Right cardiac atrium (tissue), 5 donors: ENCODE measurements at regions of chr5 and their contacts with region 1.

Region 1: DNA sequence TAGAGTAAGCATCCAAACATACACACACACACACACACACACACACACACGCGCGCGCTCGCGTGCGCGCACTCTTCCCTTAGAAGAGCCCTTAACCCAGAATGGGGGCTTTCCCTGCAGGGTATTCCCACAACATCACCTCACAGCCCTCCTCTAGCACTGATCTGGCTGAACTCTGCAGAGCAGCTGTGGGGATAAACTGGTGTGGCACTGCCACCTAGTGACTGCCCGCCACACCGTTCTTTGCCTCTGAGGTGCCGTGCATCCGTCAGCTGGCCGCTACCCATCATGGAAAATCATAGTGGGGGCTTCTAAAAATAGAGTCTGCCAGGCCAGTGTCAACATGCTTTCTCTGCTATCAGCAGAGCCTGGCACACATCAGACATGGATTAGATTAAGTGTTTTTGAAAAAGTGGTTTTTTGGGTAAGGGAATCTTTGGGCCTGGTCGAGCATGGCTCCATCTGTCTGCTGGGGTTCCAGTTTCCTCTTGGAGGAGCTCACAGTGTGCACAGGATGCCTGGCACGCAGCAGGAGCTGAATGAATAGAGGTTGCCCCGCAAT is 88.1 kb downstream of the KCNN2 start:
- DNase-seq: peak; percentile 73 to 86 (median 84)
- ATAC-seq: peak; percentile 98
- H3K4me3 ChIP-seq: no peak overlapping the region
- H3K27ac ChIP-seq: peak overlapping the region; percentile 66
- H3K4me1 ChIP-seq: no peaks in the 10 kb centered on the region
- H3K27me3 ChIP-seq: no peaks in the 10 kb centered on the region

Region 2: GRCh38 chr5:113612060-113612496 is 837.9 kb before region 1 on chr5:
- intact Hi-C with region 1: loop called in 1 of 4 experiments (anchors 10 kb)
- DNase-seq: no peak
- ATAC-seq: peak; percentile 30 to 48
- H3K4me3 ChIP-seq: no peak overlapping the region
- H3K27ac ChIP-seq: no peak overlapping the region
- H3K4me1 ChIP-seq: no peaks in the 10 kb centered on the region
- H3K27me3 ChIP-seq: no peaks in the 10 kb centered on the region

Region 3: DNA sequence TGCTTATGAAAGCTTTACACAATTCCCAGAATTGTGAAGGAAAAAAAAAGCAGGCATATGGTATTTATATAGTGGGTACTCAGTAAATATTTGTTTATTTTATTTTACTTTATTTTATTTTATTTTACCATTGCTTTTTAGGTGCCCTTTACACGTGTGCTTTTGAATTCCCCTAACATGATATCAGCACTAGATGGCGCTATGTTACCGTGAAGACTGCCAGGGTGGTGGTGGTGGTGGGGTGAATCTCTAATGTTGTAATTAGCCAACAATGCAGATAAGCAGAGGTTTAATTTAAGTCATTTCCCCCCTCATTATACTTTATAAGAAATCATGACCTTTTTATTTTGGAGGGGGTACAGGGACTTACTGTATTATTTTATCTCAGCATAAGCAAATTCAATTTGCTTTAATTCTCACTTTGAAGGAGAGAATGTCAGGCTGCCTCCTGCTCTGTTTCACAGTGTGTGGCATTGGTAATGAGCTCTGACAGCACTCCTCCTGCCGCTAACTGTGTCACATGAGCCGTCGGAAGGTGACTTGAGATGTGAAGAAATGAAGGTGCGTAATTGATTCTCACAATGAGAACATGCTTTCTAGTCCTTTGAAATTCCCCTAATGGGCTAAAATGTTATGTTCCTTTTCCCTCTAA is 770.9 kb before region 1 on chr5:
- intact Hi-C with region 1: loop called in 3 of 4 experiments (anchors 10 kb)
- DNase-seq: no peak
- ATAC-seq: peak; percentile 68 to 80
- H3K4me3 ChIP-seq: no peak overlapping the region
- H3K27ac ChIP-seq: no peak overlapping the region
- H3K4me1 ChIP-seq: no peaks in the 10 kb centered on the region
- H3K27me3 ChIP-seq: no peaks in the 10 kb centered on the region

Region 4: DNA sequence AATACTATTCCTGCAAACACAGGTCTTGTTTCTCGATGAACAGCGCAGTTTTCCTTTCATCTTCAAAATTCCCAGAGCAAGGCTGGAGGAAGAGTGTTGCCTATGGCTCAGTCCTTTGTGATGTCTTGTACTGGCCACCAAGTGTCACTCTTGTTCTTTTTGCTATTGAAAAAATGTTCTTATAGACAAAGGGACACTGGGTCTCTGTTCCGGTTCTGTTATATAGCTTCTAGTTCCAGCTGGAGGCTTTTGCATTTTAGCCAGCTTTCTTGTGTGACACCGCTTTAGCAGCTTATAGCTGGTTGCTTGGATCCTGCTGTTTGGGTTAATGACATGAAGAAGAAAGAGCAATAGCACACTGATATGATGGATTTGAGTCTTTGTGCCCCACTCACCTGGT is 431.8 kb before region 1 on chr5:
- intact Hi-C with region 1: loop called in 1 of 4 experiments (anchors 10 kb)
- DNase-seq: no peak
- ATAC-seq: peak in 1 of 2 donors; percentile 23
- H3K4me3 ChIP-seq: no peak overlapping the region
- H3K27ac ChIP-seq: no peak overlapping the region
- H3K4me1 ChIP-seq: no peaks in the 10 kb centered on the region
- H3K27me3 ChIP-seq: no peaks in the 10 kb centered on the region

Region 5: DNA sequence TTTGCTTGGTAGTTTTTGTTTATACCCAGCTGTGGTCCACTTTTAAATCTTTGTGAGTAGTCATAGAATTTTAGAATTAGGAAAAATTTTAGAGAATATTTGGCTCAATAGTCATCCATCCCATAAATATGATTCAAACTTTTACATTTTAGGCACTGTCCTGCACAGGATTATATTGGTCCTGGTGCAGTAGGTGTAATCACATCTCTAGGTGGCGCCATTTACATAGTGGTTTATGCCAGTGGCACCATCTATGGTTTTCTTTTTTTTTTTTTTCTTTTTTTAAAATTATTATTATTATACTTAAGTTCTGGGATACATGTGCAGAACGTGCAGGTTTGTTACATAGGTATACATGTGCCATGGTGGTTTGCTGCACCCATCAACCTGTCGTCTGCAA is 348.8 kb before region 1 on chr5:
- intact Hi-C with region 1: loop called in 2 of 4 experiments (anchors 5 to 10 kb)
- DNase-seq: no peak
- ATAC-seq: peak in 1 of 2 donors; percentile 50
- H3K4me3 ChIP-seq: no peak overlapping the region
- H3K27ac ChIP-seq: no peak overlapping the region
- H3K4me1 ChIP-seq: no peaks in the 10 kb centered on the region
- H3K27me3 ChIP-seq: no peaks in the 10 kb centered on the region

Region 6: DNA sequence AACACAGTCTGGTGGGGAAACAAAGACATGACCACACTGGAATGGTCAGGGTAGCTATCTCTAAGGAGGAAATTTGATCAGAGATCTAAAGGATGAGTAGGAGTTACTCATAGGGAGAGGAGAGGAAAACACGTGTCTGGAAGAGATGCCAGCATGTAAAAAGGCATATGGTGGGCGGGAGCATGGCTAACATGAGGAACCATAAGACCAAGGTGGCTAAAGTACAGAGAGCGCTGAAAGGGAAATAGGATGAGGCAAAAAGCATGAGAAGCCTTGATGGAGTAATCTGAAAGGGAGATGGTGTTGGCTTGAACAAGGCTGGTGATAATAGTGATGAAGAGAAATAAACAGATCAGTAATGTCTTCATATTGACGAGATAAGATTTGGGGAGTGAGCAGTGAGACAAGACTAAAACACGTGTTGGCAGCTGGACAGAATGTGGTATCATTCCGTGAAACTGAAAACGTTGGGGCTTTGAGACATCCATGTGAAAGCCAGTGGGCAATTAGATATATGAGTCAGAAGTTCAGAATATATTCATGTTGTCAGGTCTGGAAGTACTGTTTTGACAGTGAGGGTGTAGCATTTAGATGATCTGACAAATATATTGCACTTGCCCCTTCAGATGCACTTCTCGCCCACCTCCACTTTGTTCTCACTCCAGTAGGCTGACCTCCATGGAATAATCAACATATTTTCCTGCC is 297.1 kb before region 1 on chr5:
- intact Hi-C with region 1: no loop called
- DNase-seq: no peak
- ATAC-seq: no peak
- H3K4me3 ChIP-seq: no peak overlapping the region
- H3K27ac ChIP-seq: no peak overlapping the region
- H3K4me1 ChIP-seq: no peaks in the 10 kb centered on the region
- H3K27me3 ChIP-seq: no peaks in the 10 kb centered on the region